ENCODE measurements at regions of chr6 and their contacts with region 1.

Region 1: GRCh38 chr6:73585566-73586415 is 65.0 kb upstream of the EEF1A1 start:
- DNase-seq: peak; percentile 44 to 81 (median 58)
- ATAC-seq: peak; percentile 83
- H3K4me3 ChIP-seq: no peak overlapping the region
- H3K27ac ChIP-seq: peak overlapping the region; percentile 82
- H3K4me1 ChIP-seq: peaks cover 7 to 15% of the 10 kb centered on the region in 2 experiments; a peak in 4 of 5 replicates
- H3K27me3 ChIP-seq: no peaks in the 10 kb centered on the region
- CTCF ChIP-seq: no peak
- EP300 ChIP-seq: peak; percentile 75
- POLR2A ChIP-seq: no peak
- RAD21 ChIP-seq: 0 out of 4 replicates have a peak, but pooled peaks of 1 of the 2 experiments have one; percentile 5

Region 2: GRCh38 chr6:73604020-73604419 is 18.2 kb after region 1 on chr6:
- CTCF ChIA-PET with region 1: no interaction called
- POLR2A ChIA-PET with region 1: interaction called, 13 read pairs
- in situ Hi-C with region 1: no loop called
- intact Hi-C with region 1: no loop called
- DNase-seq: no peak
- ATAC-seq: no peak
- H3K4me3 ChIP-seq: no peak overlapping the region
- H3K27ac ChIP-seq: no peak overlapping the region
- H3K4me1 ChIP-seq: no peaks in the 10 kb centered on the region; a peak in 1 of 5 replicates
- H3K27me3 ChIP-seq: no peaks in the 10 kb centered on the region
- CTCF ChIP-seq: no peak
- EP300 ChIP-seq: no peak
- POLR2A ChIP-seq: no peak
- RAD21 ChIP-seq: no peak

Region 3: DNA sequence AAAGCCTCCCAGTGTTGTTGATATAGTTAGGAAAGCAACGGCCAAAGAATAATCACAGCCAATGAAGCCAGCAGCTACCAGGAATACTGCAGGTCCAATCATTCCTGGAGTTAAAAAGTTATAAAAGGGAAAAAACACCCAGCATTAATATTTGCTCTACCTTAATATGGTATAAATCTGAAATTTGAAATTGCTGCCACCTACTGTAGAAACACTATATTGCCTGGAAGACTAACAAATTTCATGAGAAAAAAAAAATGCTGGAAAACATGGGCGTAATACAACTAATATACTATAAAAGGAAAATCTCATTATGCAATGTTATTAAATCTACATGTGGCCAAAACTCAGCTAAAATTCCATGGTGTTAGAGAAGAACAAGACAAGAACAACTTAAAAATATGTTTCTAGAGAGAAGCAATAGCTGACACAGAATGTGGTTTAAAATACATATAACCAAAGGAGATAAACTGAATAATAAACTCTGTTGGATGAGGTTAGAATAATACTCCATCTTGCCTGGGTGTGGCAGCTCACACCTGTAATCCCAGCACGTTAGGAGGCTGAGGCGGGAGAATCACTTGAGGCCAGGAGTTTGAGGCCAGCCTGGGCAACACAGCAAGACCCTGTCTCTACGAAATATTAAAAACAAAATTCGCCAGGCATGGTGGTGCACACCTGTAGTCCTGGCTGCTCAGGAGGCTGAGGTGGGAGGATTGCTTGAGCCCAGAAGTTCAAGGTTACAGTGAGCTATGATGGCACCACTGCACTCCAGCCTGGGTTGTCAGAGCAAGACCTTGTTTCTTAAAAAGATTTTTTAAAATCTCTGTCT is 24.9 kb after region 1 on chr6:
- CTCF ChIA-PET with region 1: no interaction called
- POLR2A ChIA-PET with region 1: interaction called, 8 read pairs
- in situ Hi-C with region 1: no loop called
- intact Hi-C with region 1: loop called (anchors 1 kb)
- DNase-seq: peak in 2 of 4 experiments; percentile 28 to 46
- ATAC-seq: peak; percentile 64
- H3K4me3 ChIP-seq: no peak overlapping the region
- H3K27ac ChIP-seq: no peak overlapping the region
- H3K4me1 ChIP-seq: no peaks in the 10 kb centered on the region
- H3K27me3 ChIP-seq: no peaks in the 10 kb centered on the region
- CTCF ChIP-seq: peak; percentile 41 to 72 (median 50); a peak in 4 of 6 replicates
- EP300 ChIP-seq: no peak
- POLR2A ChIP-seq: no peak
- RAD21 ChIP-seq: peak; percentile 83 to 86

Measured in K562 (cell line).